HCT116 (cell line): ENCODE measurements at regions of chr5 and their contacts with region 1.

Region 1: GRCh38 chr5:180868960-180869359 is 7.9 kb upstream of the ZFP62 start:
- DNase-seq: peak; percentile 82
- ATAC-seq: peak; percentile 96
- H3K4me3 ChIP-seq: no peak overlapping the region
- H3K27ac ChIP-seq: no peak overlapping the region
- H3K4me1 ChIP-seq: peaks cover 0 to 11% of the 10 kb centered on the region in 2 experiments; a peak in 1 of 4 replicates
- H3K27me3 ChIP-seq: no peaks in the 10 kb centered on the region
- CTCF ChIP-seq: peak; percentile 85 to 92 (median 88)
- POLR2A ChIP-seq: no peak
- RAD21 ChIP-seq: peak; percentile 95

Region 2: DNA sequence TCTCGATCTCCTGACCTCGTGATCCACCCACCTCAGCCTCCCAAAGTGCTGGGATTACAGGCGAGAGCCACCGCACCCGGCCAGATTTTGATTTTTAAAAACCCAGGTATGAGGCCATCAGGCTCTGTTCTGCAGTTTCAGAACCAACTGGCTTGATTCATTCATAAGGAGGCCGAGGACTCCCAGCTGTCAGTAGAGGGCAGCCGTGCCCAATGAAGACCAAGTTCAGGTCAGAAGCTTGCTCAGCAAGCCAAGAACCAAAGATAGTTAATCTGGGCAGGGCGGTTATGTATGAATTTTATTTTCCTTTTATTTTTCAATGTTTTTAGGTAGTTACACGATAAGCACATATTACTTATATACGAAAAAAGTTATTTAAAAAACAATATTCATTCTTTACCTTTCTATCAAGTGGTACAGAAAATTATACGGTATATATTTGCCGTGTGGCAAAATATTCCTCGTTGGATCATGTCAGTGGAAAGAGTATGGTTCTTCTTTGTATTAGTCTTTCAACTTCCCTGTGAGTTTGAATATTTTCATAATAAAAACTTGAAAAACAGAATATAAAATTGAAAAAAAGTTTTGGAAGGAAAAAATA is 84.4 kb before region 1 on chr5:
- CTCF ChIA-PET with region 1: interaction called, 4 read pairs
- POLR2A ChIA-PET with region 1: no interaction called
- RAD21 ChIA-PET with region 1: no interaction called
- intact Hi-C with region 1: loop called (anchors 1 kb)
- DNase-seq: peak; percentile 68
- ATAC-seq: peak; percentile 86
- H3K4me3 ChIP-seq: no peak overlapping the region
- H3K27ac ChIP-seq: no peak overlapping the region
- H3K4me1 ChIP-seq: peaks cover 9 to 10% of the 10 kb centered on the region in 2 experiments; a peak in 3 of 4 replicates
- H3K27me3 ChIP-seq: no peaks in the 10 kb centered on the region
- CTCF ChIP-seq: peak; percentile 65 to 81 (median 74)
- POLR2A ChIP-seq: no peak
- RAD21 ChIP-seq: peak; percentile 90

Region 3: GRCh38 chr5:180799194-180799593 is 69.8 kb before region 1 on chr5:
- CTCF ChIA-PET with region 1: no interaction called
- POLR2A ChIA-PET with region 1: no interaction called
- RAD21 ChIA-PET with region 1: no interaction called
- intact Hi-C with region 1: loop called (anchors 5 kb)
- DNase-seq: no peak
- ATAC-seq: peak; percentile 26; the same call in 1 of the 2 replicates
- H3K4me3 ChIP-seq: no peak overlapping the region
- H3K27ac ChIP-seq: no peak overlapping the region
- H3K4me1 ChIP-seq: peaks cover 5 to 40% of the 10 kb centered on the region in 2 experiments; a peak in 3 of 4 replicates
- H3K27me3 ChIP-seq: no peaks in the 10 kb centered on the region
- CTCF ChIP-seq: peak in 2 of 3 experiments; percentile 52 to 54; a peak in 4 of 6 replicates
- POLR2A ChIP-seq: no peak
- RAD21 ChIP-seq: 0 out of 2 replicates have a peak, but pooled peaks have one; percentile 33

Region 4: GRCh38 chr5:181028032-181028819 is 159.3 kb after region 1 on chr5:
- CTCF ChIA-PET with region 1: no interaction called
- POLR2A ChIA-PET with region 1: no interaction called
- RAD21 ChIA-PET with region 1: no interaction called
- intact Hi-C with region 1: loop called (anchors 5 kb)
- DNase-seq: peak; percentile 90
- ATAC-seq: peak; percentile 96
- H3K4me3 ChIP-seq: peak overlapping the region; percentile 54 to 64
- H3K27ac ChIP-seq: peak overlapping the region; percentile 67
- H3K4me1 ChIP-seq: peaks cover 0 to 16% of the 10 kb centered on the region in 2 experiments; a peak in 2 of 4 replicates
- H3K27me3 ChIP-seq: no peaks in the 10 kb centered on the region
- CTCF ChIP-seq: no peak
- POLR2A ChIP-seq: peak; percentile 99
- RAD21 ChIP-seq: no peak

Region 5: GRCh38 chr5:181088289-181088688 is 219.3 kb after region 1 on chr5:
- CTCF ChIA-PET with region 1: interaction called, 8 read pairs
- POLR2A ChIA-PET with region 1: no interaction called
- RAD21 ChIA-PET with region 1: interaction called in 1 of 2 experiments, 4 read pairs
- intact Hi-C with region 1: loop called (anchors 2 kb)
- DNase-seq: peak; percentile 42
- ATAC-seq: peak; percentile 99
- H3K4me3 ChIP-seq: no peak overlapping the region
- H3K27ac ChIP-seq: no peak overlapping the region
- H3K4me1 ChIP-seq: no peaks in the 10 kb centered on the region
- H3K27me3 ChIP-seq: no peaks in the 10 kb centered on the region; the same call in 1 of the 2 replicates
- CTCF ChIP-seq: peak; percentile 53 to 80 (median 71); a peak in 5 of 6 replicates
- POLR2A ChIP-seq: no peak
- RAD21 ChIP-seq: peak; percentile 59

Region 6: GRCh38 chr5:181159286-181159829 is 290.4 kb after region 1 on chr5:
- CTCF ChIA-PET with region 1: no interaction called
- POLR2A ChIA-PET with region 1: no interaction called
- RAD21 ChIA-PET with region 1: no interaction called
- intact Hi-C with region 1: loop called (anchors 1 kb)
- DNase-seq: peak; percentile 73
- ATAC-seq: peak; percentile 85
- H3K4me3 ChIP-seq: no peak overlapping the region
- H3K27ac ChIP-seq: peak overlapping the region; percentile 77; the same call in 1 of the 2 replicates
- H3K4me1 ChIP-seq: peaks cover 12 to 34% of the 10 kb centered on the region in 2 experiments
- H3K27me3 ChIP-seq: no peaks in the 10 kb centered on the region
- CTCF ChIP-seq: peak; percentile 91 to 96 (median 91)
- POLR2A ChIP-seq: no peak
- RAD21 ChIP-seq: peak; percentile 92